Heart left ventricle (tissue), 16 donors: ENCODE measurements at regions of chr10 and their contacts with region 1.

Region 1: DNA sequence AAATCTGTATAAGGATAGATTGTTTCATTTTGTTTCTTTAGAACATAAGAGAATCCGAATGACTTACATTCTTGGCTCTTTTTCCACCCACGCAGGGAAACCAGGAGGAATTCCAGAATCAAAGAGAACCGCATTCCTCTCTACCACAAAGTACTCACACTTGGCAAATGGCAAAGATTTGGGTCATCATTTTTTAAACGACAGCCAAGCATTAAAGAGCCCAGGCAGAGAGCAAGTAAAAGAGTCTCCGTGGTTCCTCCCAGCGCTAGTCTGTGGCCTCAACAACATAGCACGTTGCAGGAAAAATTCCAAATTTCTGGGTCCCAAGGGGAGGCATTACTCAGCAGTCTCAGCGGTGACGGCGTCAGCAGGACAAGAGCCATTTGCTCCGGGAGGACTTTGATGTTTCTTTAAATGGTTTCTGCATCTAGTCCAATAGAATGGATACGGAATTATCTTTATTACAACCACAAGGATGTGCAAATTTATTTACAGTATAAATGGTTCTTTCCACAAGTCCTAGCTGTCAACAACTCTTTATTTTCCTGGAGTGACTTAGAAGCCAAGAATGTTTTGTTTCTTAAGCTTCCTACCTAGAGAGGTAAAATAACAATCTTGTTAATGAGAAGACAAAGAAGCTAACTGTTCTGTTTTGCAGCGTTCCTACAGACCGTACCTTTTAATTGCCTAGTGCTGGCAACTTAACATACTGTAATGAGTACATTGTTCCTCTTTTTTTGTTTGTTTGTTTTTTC is 232.5 kb downstream of the SKIDA1 start:
- DNase-seq: peak; percentile 72 to 82 (median 76)
- ATAC-seq: peak; percentile 61 to 94 (median 92)
- H3K4me3 ChIP-seq: peak overlapping the region in 9 of 12 donors; percentile 23 to 42 (median 34)
- H3K27ac ChIP-seq: peak overlapping the region in 7 of 12 donors; percentile 23 to 61 (median 35)
- H3K4me1 ChIP-seq: peaks cover 0 to 23% (median 14%) of the 10 kb centered on the region in 12 donors
- H3K27me3 ChIP-seq: peaks cover 0 to 5% (median 0%) of the 10 kb centered on the region in 9 donors
- CTCF ChIP-seq: no peak
- POLR2A ChIP-seq: no peak

Region 2: GRCh38 chr10:20948686-20949327 is 344.1 kb before region 1 on chr10:
- intact Hi-C with region 1: no loop called
- DNase-seq: no peak
- ATAC-seq: no peak
- H3K4me3 ChIP-seq: no peak overlapping the region
- H3K27ac ChIP-seq: no peak overlapping the region
- H3K4me1 ChIP-seq: peaks cover 0 to 2% (median 0%) of the 10 kb centered on the region in 12 donors
- H3K27me3 ChIP-seq: no peaks in the 10 kb centered on the region
- CTCF ChIP-seq: no peak
- POLR2A ChIP-seq: no peak

Region 3: GRCh38 chr10:21173812-21174714 is 118.9 kb before region 1 on chr10:
- intact Hi-C with region 1: no loop called
- DNase-seq: peak; percentile 31 to 71 (median 55)
- ATAC-seq: peak; percentile 60 to 88 (median 78)
- H3K4me3 ChIP-seq: peak overlapping the region; percentile 50 to 74 (median 62)
- H3K27ac ChIP-seq: peak overlapping the region in 11 of 12 donors; percentile 6 to 76 (median 52)
- H3K4me1 ChIP-seq: peaks cover 0 to 26% (median 6%) of the 10 kb centered on the region in 12 donors
- H3K27me3 ChIP-seq: peaks cover 0 to 31% (median 0%) of the 10 kb centered on the region in 9 donors
- CTCF ChIP-seq: no peak
- POLR2A ChIP-seq: no peak

Region 4: GRCh38 chr10:21314906-21315644 is 22.1 kb after region 1 on chr10:
- intact Hi-C with region 1: loop called in 1 of 10 experiments (anchors 1 kb)
- DNase-seq: peak in 2 of 5 donors; percentile 35 to 59
- ATAC-seq: peak; percentile 45 to 77 (median 54)
- H3K4me3 ChIP-seq: no peak overlapping the region
- H3K27ac ChIP-seq: peak overlapping the region in 11 of 12 donors; percentile 30 to 75 (median 57)
- H3K4me1 ChIP-seq: peaks cover 5 to 33% (median 22%) of the 10 kb centered on the region in 12 donors
- H3K27me3 ChIP-seq: no peaks in the 10 kb centered on the region
- CTCF ChIP-seq: no peak
- POLR2A ChIP-seq: no peak

Region 5: GRCh38 chr10:21355561-21356011 is 62.6 kb after region 1 on chr10:
- intact Hi-C with region 1: loop called in 3 of 10 experiments (anchors 5 to 10 kb)
- DNase-seq: no peak
- ATAC-seq: no peak
- H3K4me3 ChIP-seq: no peak overlapping the region
- H3K27ac ChIP-seq: no peak overlapping the region
- H3K4me1 ChIP-seq: peaks cover 0 to 4% (median under 1%) of the 10 kb centered on the region in 12 donors
- H3K27me3 ChIP-seq: no peaks in the 10 kb centered on the region
- CTCF ChIP-seq: no peak
- POLR2A ChIP-seq: no peak

Region 6: DNA sequence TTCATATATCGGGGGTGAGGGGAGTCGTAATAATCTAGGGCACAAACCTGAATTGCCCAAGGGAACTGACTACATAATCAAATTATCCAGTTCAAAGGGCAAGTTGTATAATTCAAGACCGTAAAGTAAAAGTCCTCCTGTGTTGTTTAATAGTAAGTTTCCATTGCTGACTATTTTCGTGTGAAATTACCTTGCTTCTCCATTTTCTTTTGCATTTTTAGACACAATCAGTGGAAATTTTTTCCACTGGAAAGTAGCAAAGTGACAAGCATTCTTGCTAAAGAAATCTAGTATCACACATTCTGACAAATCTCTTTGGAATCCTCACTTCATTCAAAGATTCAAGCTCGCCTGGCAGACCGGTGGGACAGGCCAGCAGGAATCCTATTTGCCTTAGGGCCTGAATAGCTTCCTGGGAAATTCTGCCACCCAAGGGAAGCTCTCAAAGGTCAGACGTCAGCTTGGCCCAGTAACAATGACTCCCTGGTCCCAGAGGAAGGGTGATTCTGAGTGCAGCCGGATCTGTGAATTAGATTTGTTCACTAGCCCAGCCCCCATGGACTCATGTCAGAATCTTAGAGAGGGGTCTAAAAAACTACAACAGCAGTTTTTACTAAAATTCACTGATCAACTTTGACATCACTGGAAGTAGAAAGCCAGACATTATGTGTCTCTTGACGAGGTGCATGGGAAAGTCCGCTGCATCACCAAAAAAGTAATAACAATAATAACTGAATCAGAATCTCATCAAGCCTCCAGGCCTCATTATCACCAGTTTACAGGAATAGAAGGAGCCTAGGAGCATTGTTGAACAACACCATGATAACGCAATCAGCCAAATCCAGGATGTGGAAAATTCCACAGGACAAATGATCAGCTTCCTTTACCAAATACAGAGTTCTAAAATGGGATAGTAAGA is 71.5 kb after region 1 on chr10:
- intact Hi-C with region 1: loop called in 3 of 10 experiments (anchors 5 to 10 kb)
- DNase-seq: peak in 4 of 5 donors; percentile 60 to 70 (median 69)
- ATAC-seq: peak; percentile 73 to 94 (median 90)
- H3K4me3 ChIP-seq: no peak overlapping the region
- H3K27ac ChIP-seq: peak overlapping the region; percentile 29 to 89 (median 66)
- H3K4me1 ChIP-seq: peaks cover 8 to 36% (median 26%) of the 10 kb centered on the region in 12 donors
- H3K27me3 ChIP-seq: no peaks in the 10 kb centered on the region
- CTCF ChIP-seq: no peak
- POLR2A ChIP-seq: no peak

Region 7: DNA sequence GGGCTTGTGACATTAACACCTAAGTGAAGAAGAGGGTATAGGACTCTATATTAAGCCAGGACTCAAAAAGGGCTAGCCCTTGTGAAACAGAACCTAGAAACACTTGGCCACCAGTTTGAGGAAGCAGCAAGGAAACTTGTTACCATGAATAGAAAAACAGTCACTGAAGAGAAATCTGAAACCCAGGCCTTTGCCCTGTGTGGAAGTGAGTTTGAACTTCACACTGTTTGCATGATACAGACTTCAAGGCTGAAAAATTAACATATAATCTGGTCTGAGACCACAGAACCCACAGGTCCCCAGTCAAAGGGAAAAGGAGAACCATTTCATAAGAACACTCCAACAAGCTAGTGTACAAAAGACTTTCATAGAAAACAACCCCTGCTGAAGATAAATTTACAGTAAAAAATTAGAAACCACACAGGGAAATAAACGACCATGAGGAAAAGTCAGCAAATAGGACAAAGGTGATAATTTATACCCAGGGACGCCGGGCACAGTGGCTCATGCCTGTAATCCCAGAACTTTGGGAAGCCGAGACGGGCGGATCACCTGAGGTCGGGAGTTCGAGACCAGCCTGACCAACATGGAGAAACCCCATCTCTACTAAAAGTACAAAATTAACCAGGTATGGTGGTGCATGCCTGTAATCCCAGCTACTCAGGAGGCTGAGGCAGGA is 156.5 kb after region 1 on chr10:
- intact Hi-C with region 1: no loop called
- DNase-seq: no peak
- ATAC-seq: no peak
- H3K4me3 ChIP-seq: no peak overlapping the region
- H3K27ac ChIP-seq: no peak overlapping the region
- H3K4me1 ChIP-seq: no peaks in the 10 kb centered on the region
- H3K27me3 ChIP-seq: no peaks in the 10 kb centered on the region
- CTCF ChIP-seq: no peak
- POLR2A ChIP-seq: no peak